Right cardiac atrium (tissue), 5 donors: ENCODE measurements at regions of chr17 and their contacts with region 1.

Region 1: GRCh38 chr17:31740611-31741082 is 118.4 kb downstream of the COPRS start:
- DNase-seq: peak in 1 of 3 donors; percentile 18
- ATAC-seq: no peak
- H3K4me3 ChIP-seq: no peak overlapping the region
- H3K27ac ChIP-seq: no peak overlapping the region
- H3K4me1 ChIP-seq: peaks cover 5% of the 10 kb centered on the region
- H3K27me3 ChIP-seq: no peaks in the 10 kb centered on the region

Region 2: GRCh38 chr17:31388770-31389661 is 351.6 kb before region 1 on chr17:
- intact Hi-C with region 1: no loop called
- DNase-seq: peak in 1 of 3 donors; percentile 66
- ATAC-seq: peak; percentile 32 to 41
- H3K4me3 ChIP-seq: no peak overlapping the region
- H3K27ac ChIP-seq: no peak overlapping the region
- H3K4me1 ChIP-seq: no peaks in the 10 kb centered on the region
- H3K27me3 ChIP-seq: no peaks in the 10 kb centered on the region

Region 3: DNA sequence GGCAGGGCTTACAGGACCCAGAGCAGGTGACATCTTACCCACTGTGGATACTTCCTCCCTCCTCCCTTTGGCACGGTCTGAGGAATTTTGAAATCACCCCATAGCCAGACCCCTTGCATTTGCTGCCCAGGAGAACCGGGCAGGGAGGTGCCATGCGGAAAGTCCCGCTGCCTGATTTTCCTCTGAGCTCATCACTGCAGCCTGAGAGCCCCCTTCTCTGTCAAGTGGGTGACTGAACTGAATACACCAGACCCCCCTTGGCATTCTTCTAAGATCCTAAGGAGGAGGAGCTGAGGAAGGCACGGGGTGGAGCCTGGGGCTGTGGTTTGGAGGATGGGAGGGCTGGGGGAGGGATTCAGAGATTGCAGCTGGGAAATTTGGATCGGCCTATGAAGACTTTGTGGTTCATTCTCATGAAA is 175.8 kb before region 1 on chr17:
- intact Hi-C with region 1: loop called in 1 of 4 experiments (anchors 5 kb)
- DNase-seq: no peak
- ATAC-seq: peak in 1 of 2 donors; percentile 17
- H3K4me3 ChIP-seq: no peak overlapping the region
- H3K27ac ChIP-seq: no peak overlapping the region
- H3K4me1 ChIP-seq: peaks cover 17% of the 10 kb centered on the region
- H3K27me3 ChIP-seq: no peaks in the 10 kb centered on the region